Activated T-helper 1 cell treated with anti-CD3 and anti-CD28 coated beads, Interleukin-12 subunit alpha, Interleukin-12 subunit beta, Interleukin-2, Interleukin-4 antibody, amounts not matched to agents 30 ng/mL and 10 ng/mL and 1 ng/mL, durations not matched to agents 14 hours and 24 hours and 36 hours (primary cell): ENCODE measurements at regions of chr11 and their contacts with region 1.

Region 1: DNA sequence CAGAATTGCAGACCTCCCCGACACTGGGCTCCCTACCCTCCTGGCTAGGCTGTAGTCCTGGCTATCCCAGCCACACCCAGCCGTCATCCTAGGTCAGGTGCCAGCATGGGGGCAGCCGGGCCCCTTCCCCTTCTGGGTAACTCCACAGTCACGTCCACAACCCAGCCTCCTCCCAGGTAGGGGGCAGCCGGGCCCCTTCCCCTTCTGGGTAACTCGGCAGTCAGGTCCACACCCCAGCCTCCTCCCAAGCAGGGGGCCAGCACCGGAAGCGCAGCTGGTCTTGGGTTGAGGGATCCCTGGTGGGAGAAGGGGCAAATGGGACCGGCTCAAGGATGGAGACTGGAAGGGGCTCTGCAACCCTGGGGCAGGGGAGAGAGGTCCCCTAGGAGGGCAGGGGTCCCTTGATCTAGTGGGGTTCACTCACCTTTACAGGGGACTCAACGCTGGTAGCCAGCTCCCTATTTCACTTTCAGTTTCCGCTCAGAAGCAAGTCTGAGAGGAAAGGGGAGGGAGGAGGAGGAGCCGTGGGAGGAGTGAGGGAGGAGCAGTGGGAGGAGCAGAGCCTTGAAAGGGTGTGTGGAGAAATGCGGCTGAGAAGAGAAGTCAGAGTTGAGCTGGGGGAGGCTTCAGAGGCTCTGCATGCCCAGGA is at the start of gene TRIM21:
- DNase-seq: peak; percentile 88
- H3K4me3 Mint-ChIP-seq: peak within 1 kb of the TSS; percentile 89
- H3K27ac Mint-ChIP-seq: peak within 1 kb of the TSS; percentile 87
- H3K4me1 Mint-ChIP-seq: peaks cover 43% of the 10 kb centered on the region
- H3K27me3 Mint-ChIP-seq: no peaks in the 10 kb centered on the region
- total RNA-seq, gene TRIM21: 28.8 and 31.6 TPM in 2 replicates

Region 2: GRCh38 chr11:2444821-2445745 is 1948.2 kb before region 1 on chr11 and contains the start of gene KCNQ1:
- intact Hi-C with region 1: loop called (anchors 10 kb)
- DNase-seq: peak; percentile 49
- H3K4me3 Mint-ChIP-seq: peak within 1 kb of the TSS; percentile 88
- H3K27ac Mint-ChIP-seq: peak within 1 kb of the TSS; percentile 65
- H3K4me1 Mint-ChIP-seq: peaks cover 27% of the 10 kb centered on the region
- H3K27me3 Mint-ChIP-seq: peaks cover 14% of the 10 kb centered on the region
- total RNA-seq, gene KCNQ1: 5.3 and 6.4 TPM in 2 replicates

Region 3: GRCh38 chr11:4167758-4168157 is 225.6 kb before region 1 on chr11:
- intact Hi-C with region 1: no loop called
- DNase-seq: no peak
- H3K4me3 Mint-ChIP-seq: no peak overlapping the region
- H3K27ac Mint-ChIP-seq: no peak overlapping the region
- H3K4me1 Mint-ChIP-seq: no peaks in the 10 kb centered on the region
- H3K27me3 Mint-ChIP-seq: peaks cover 2% of the 10 kb centered on the region

Region 4: GRCh38 chr11:4375431-4376140 is 17.7 kb before region 1 on chr11:
- intact Hi-C with region 1: loop called (anchors 2 kb)
- DNase-seq: no peak
- H3K4me3 Mint-ChIP-seq: no peak overlapping the region
- H3K27ac Mint-ChIP-seq: no peak overlapping the region
- H3K4me1 Mint-ChIP-seq: no peaks in the 10 kb centered on the region
- H3K27me3 Mint-ChIP-seq: no peaks in the 10 kb centered on the region

Region 5: GRCh38 chr11:4493480-4493818 is 100.1 kb after region 1 on chr11:
- intact Hi-C with region 1: loop called (anchors 1 kb)
- DNase-seq: no peak
- H3K4me3 Mint-ChIP-seq: no peak overlapping the region
- H3K27ac Mint-ChIP-seq: no peak overlapping the region
- H3K4me1 Mint-ChIP-seq: no peaks in the 10 kb centered on the region
- H3K27me3 Mint-ChIP-seq: peaks cover 24% of the 10 kb centered on the region

Region 6: GRCh38 chr11:4607781-4608666 is 214.7 kb after region 1 on chr11 and contains the start of gene TRIM68:
- intact Hi-C with region 1: loop called (anchors 1 kb)
- DNase-seq: peak; percentile 94
- H3K4me3 Mint-ChIP-seq: peak within 1 kb of the TSS; percentile 92
- H3K27ac Mint-ChIP-seq: peak within 1 kb of the TSS; percentile 88
- H3K4me1 Mint-ChIP-seq: peaks cover 46% of the 10 kb centered on the region
- H3K27me3 Mint-ChIP-seq: no peaks in the 10 kb centered on the region
- total RNA-seq, gene TRIM68: 8.2 and 9.4 TPM in 2 replicates